ENCODE measurements at regions of chr5 and their contacts with region 1.

Region 1: GRCh38 chr5:159316519-159317383 is 13.5 kb downstream of the IL12B start:
- DNase-seq: peak; percentile 64

Region 2: GRCh38 chr5:159286420-159287035 is 30.2 kb before region 1 on chr5:
- CTCF ChIA-PET with region 1: interaction called, 10 read pairs
- POLR2A ChIA-PET with region 1: no interaction called
- DNase-seq: peak; percentile 23